Activated CD4-positive, alpha-beta T cell treated with anti-CD3 and anti-CD28 coated beads, Interleukin-2, amount 10 ng/mL, durations not matched to agents 24 days and 14 days (primary cell): ENCODE measurements at regions of chr6 and their contacts with region 1.

Region 1: GRCh38 chr6:30556066-30556905 is at the start of gene GNL1:
- DNase-seq: peak; percentile 99
- H3K4me3 Mint-ChIP-seq: peak within 1 kb of the TSS; percentile 89
- H3K27ac Mint-ChIP-seq: peak within 1 kb of the TSS; percentile 97
- H3K4me1 Mint-ChIP-seq: peaks cover 29% of the 10 kb centered on the region
- H3K27me3 Mint-ChIP-seq: no peaks in the 10 kb centered on the region
- total RNA-seq, gene GNL1: 80.9 and 93.0 TPM in 2 replicates

Region 2: DNA sequence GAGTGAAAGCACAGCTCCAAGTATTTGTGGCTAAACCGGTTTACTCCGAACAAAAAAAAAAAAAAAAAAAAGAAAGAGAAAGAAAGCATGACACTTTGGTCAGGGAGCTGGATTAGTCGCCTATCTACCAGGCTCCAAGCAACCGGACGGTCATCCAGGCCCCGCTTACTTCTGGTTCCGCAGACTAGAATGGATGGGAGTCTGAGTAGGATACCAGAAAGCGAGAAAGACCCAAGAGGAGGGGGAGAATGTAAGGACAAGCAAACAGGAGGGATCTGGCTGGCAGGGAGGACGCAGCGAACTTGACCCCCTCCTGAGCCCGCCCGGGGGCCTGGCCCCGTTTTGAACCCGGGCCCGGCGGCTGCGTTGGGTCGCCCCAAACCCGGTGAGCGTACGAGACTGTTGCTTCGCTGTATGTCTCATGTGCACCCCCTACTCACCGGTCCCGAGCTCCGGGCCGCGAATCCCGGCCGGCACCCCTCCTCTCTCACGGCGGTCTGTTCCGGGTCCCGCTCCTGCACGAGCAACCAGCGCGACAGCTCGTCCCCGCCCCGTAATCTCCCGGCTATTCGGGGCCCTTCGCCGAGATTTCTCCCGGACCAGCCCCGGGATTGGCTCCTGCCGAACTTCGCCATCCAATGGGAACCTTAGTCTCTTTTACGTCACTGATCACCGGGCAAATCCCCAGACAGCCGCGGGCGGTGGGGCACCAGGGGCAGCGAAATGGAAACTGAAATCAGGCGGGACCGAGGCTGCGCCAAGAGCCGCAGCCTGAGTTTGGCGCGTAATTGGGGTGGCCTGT is 343.2 kb before region 1 on chr6 and contains the start of gene TRIM26:
- intact Hi-C with region 1: loop called (anchors 10 kb)
- DNase-seq: peak; percentile 100
- H3K4me3 Mint-ChIP-seq: peak within 1 kb of the TSS; percentile 96
- H3K27ac Mint-ChIP-seq: peak within 1 kb of the TSS; percentile 98
- H3K4me1 Mint-ChIP-seq: peaks cover 47% of the 10 kb centered on the region
- H3K27me3 Mint-ChIP-seq: peaks cover 2% of the 10 kb centered on the region
- total RNA-seq, gene TRIM26: 58.3 and 60.1 TPM in 2 replicates

Region 3: DNA sequence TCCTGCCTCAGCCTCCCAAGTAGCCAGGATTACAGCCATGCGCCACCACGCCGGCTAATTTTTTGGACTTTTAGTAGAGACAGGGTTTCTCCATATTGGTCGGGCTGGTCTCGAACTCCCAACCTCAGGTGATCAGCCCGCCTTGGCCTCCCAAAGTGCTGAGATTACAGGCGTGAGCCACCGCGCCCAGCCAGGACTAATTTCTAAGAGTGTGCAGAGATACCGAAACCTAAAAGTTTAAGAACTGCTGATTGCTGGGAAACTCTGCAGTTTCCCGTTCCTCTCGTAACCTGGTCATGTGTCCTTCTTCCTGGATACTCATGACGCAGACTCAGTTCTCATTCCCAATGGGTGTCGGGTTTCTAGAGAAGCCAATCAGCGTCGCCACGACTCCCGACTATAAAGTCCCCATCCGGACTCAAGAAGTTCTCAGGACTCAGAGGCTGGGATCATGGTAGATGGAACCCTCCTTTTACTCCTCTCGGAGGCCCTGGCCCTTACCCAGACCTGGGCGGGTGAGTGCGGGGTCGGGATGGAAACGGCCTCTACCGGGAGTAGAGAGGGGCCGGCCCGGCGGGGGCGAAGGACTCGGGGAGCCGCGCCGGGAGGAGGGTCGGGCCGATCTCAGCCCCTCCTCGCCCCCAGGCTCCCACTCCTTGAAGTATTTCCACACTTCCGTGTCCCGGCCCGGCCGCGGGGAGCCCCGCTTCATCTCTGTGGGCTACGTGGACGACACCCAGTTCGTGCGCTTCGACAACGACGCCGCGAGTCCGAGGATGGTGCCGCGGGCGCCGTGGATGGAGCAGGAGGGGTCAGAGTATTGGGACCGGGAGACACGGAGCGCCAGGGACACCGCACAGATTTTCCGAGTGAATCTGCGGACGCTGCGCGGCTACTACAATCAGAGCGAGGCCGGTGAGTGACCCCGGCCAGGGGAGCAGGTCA is 66.9 kb before region 1 on chr6 and contains the start of gene HLA-E:
- intact Hi-C with region 1: loop called (anchors 1 kb)
- DNase-seq: peak; percentile 98
- H3K4me3 Mint-ChIP-seq: peak within 1 kb of the TSS; percentile 100
- H3K27ac Mint-ChIP-seq: peak within 1 kb of the TSS; percentile 97
- H3K4me1 Mint-ChIP-seq: peaks cover 52% of the 10 kb centered on the region
- H3K27me3 Mint-ChIP-seq: no peaks in the 10 kb centered on the region
- total RNA-seq, gene HLA-E: 484 and 488 TPM in 2 replicates

Region 4: GRCh38 chr6:30611150-30611855 is 55.0 kb after region 1 on chr6:
- intact Hi-C with region 1: no loop called
- DNase-seq: no peak
- H3K4me3 Mint-ChIP-seq: peak overlapping the region; percentile 4
- H3K27ac Mint-ChIP-seq: no peak overlapping the region
- H3K4me1 Mint-ChIP-seq: peaks cover 60% of the 10 kb centered on the region
- H3K27me3 Mint-ChIP-seq: no peaks in the 10 kb centered on the region

Region 5: DNA sequence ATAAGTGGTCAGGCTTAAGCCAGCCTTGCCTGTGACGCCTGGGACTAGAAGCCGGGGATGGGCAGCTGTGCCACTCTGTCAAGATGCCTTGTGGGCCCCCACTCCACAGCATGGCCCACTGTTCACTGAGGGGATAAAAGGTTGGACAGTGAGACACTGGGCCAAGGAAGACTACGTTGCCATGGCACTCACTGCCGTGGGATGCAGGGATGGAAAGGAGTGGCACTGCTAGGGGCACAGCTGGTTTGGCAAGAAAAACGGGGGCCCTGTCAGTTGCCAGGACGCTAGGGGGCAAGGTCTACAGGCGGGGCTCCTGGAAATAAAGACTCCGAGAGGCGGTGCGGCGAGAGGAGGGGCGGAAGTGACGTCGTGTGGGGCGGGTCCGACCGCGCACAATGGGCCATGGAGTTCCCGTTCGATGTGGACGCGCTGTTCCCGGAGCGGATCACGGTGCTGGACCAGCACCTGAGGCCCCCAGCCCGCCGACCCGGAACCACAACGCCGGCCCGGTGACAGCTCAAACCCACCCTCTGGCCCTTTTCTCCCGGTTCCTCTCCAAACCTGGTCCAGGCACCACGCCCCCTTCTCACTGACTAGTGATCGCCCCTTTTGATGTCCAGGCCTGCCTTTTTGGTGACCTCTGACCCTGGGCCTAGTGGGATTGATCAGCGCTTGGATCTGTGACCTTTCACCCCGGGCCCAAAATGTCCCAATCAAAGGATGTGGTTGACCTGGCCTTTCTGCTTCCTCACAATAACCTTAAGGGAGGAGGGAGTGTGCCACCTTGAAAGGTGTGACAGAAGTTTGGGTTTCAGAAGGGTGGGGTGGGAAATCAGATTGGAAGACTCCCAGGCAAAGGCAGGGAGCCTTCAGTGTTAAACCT is 70.4 kb after region 1 on chr6 and contains the start of gene ATAT1:
- intact Hi-C with region 1: no loop called
- DNase-seq: peak; percentile 97
- H3K4me3 Mint-ChIP-seq: peak within 1 kb of the TSS; percentile 91
- H3K27ac Mint-ChIP-seq: peak within 1 kb of the TSS; percentile 95
- H3K4me1 Mint-ChIP-seq: peaks cover 21% of the 10 kb centered on the region
- H3K27me3 Mint-ChIP-seq: no peaks in the 10 kb centered on the region
- total RNA-seq, gene ATAT1: 11.4 and 14.4 TPM in 2 replicates

Region 6: GRCh38 chr6:30717042-30717844 is 161.0 kb after region 1 on chr6 and contains the start of gene MDC1:
- intact Hi-C with region 1: loop called (anchors 1 kb)
- DNase-seq: peak; percentile 99
- H3K4me3 Mint-ChIP-seq: peak within 1 kb of the TSS; percentile 95
- H3K27ac Mint-ChIP-seq: peak within 1 kb of the TSS; percentile 99
- H3K4me1 Mint-ChIP-seq: peaks cover 45% of the 10 kb centered on the region
- H3K27me3 Mint-ChIP-seq: no peaks in the 10 kb centered on the region
- total RNA-seq, gene MDC1: 93.9 and 97.2 TPM in 2 replicates